Mammary epithelial cell (primary cell): ENCODE measurements at regions of chr5 and their contacts with region 1.

Region 1: DNA sequence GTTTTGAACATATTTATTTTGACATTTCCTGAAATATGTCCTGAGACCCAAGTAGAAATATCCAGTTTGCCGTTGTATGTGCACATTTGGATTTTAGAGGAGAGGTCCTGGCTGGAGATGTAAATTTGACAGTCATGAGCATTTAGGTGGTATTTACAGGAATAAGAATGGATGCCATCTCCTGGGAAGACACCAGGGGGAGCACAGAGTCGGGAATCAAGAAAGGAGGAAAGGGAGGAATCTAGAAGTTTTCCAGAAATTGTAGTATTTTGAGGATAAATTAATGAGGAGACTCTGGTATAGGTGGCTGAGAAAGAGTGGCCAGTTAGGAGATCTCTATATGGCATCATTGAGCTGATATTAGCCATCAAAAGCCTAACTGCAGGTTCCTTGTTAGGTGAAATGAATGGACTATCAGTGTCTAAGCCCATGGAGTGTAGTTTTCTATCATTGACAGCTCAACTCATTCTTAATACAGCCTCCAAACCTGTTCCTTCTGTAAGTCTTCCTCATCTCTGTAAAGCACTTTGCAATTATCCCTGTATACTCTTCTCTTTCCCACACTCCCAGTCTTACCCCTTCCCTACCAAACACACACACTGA is 7.2 kb downstream of the GAPT start:
- DNase-seq: peak; percentile 2
- H3K4me3 ChIP-seq: no peak overlapping the region
- H3K27ac ChIP-seq: no peak overlapping the region
- H3K4me1 ChIP-seq: no peaks in the 10 kb centered on the region
- H3K27me3 ChIP-seq: no peaks in the 10 kb centered on the region
- CTCF ChIP-seq: peak; percentile 84 to 86

Region 2: GRCh38 chr5:58369513-58370190 is 128.8 kb before region 1 on chr5:
- CTCF ChIA-PET with region 1: interaction called, 15 read pairs
- dilution Hi-C with region 1: no loop called
- in situ Hi-C with region 1: no loop called
- intact Hi-C with region 1: no loop called
- DNase-seq: no peak
- H3K4me3 ChIP-seq: no peak overlapping the region
- H3K27ac ChIP-seq: no peak overlapping the region
- H3K4me1 ChIP-seq: no peaks in the 10 kb centered on the region
- H3K27me3 ChIP-seq: no peaks in the 10 kb centered on the region
- CTCF ChIP-seq: no peak

Region 3: DNA sequence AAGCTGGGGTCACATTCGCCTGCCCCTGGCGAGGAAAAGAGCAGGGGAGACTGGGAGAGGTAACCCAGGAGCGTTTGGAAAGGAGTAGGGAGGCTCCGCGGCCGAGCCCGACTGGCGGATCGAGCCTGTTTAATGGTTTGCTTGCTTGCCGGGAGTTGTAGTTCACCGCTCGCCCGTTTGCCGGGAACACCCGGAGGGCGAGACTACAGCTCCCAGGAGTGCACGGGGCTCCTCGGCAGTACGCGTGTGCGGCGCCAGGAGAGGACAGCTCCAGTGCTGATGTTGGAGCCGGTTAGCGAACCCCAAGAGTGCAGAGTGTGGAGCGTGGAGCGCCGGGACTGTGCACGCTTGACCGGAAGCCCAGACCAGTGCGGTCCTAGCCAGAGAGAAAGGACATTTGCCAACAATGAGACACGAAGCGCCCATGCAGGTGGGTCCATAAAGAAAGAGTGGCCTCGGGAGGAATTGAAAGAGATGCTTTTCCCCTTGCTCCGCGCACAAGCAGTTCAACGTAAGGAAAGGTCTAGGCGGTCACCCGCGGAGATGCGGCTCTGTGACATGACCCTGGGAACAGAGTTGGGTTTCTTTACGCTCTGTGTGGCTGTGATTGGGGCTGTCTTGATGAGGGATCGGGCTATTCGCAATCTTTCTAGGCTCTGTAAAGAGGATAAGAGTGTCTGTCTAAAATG is 84.5 kb after region 1 on chr5 and contains the start of gene RAB3C:
- CTCF ChIA-PET with region 1: no interaction called
- dilution Hi-C with region 1: loop called (anchors 5 kb)
- in situ Hi-C with region 1: no loop called
- intact Hi-C with region 1: loop called (anchors 1 kb)
- DNase-seq: peak; percentile 91
- H3K4me3 ChIP-seq: peak within 1 kb of the TSS; percentile 44 to 61 (median 59)
- H3K27ac ChIP-seq: no peak within 1 kb of the TSS
- H3K4me1 ChIP-seq: peaks cover 6% of the 10 kb centered on the region
- H3K27me3 ChIP-seq: peaks cover 9% of the 10 kb centered on the region
- CTCF ChIP-seq: no peak
- total RNA-seq, gene RAB3C: not detected

Region 4: DNA sequence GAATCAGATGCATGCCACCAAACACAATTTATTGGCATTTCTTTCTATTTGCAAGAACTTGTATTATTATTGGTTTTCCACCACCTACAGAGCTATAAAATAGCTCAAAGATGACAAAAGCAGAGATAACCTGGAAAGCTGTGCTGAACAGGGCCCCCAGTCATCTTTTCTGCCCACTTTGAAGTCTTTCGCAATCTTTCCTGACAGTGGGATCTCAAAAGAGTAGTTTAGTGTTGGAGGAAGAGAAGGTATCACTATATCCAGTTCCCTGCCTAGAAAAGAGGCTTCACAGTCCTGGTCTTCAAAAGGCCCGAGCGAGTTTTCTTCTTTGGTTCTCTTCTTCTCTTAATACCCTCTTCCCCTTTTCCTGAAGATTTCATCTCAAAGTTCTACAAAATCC is 315.4 kb after region 1 on chr5:
- CTCF ChIA-PET with region 1: no interaction called
- dilution Hi-C with region 1: no loop called
- in situ Hi-C with region 1: no loop called
- intact Hi-C with region 1: loop called (anchors 1 kb)
- DNase-seq: no peak
- H3K4me3 ChIP-seq: no peak overlapping the region
- H3K27ac ChIP-seq: no peak overlapping the region
- H3K4me1 ChIP-seq: no peaks in the 10 kb centered on the region
- H3K27me3 ChIP-seq: peaks cover 4% of the 10 kb centered on the region
- CTCF ChIP-seq: no peak

Region 5: DNA sequence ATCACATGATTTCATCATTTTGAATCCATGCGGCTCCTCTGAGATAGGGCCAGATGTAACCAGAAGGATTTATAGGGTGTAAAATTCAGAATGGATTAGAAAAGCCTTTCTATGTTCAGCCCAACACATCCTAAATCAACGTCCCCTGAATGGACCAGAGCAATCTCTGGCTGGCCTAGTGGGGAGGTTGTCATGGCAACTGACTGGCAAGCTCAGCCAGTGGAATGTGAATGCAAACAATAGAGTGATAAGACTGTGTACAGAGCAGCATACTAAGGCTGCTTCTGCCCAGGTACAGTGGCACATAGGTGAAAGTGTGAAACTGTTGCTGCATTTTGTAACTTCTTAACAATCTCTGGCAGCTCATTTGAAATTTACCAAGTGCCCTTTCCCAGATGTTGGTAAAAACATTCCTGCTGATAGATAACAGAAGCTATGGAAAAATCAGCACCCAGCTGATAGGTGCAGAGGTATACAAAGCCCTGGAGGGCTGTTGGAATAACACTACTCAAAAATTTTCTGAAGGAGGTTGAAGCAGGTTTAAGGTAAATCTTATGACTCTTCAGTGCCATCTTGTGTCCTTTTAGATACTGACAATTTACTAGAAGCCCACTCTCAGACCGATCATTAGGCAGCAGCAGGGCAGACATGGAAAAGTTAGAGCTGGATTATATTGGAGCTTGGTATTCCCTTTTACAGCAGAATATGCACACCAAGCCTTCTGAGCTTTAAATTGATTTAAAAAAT is 351.7 kb after region 1 on chr5:
- CTCF ChIA-PET with region 1: no interaction called
- dilution Hi-C with region 1: no loop called
- in situ Hi-C with region 1: loop called in 1 of 2 experiments (anchors 25 kb)
- intact Hi-C with region 1: loop called (anchors 1 kb)
- DNase-seq: peak; percentile 9
- H3K4me3 ChIP-seq: no peak overlapping the region
- H3K27ac ChIP-seq: no peak overlapping the region
- H3K4me1 ChIP-seq: no peaks in the 10 kb centered on the region
- H3K27me3 ChIP-seq: peaks cover 4% of the 10 kb centered on the region
- CTCF ChIP-seq: peak; percentile 24 to 57

Region 6: DNA sequence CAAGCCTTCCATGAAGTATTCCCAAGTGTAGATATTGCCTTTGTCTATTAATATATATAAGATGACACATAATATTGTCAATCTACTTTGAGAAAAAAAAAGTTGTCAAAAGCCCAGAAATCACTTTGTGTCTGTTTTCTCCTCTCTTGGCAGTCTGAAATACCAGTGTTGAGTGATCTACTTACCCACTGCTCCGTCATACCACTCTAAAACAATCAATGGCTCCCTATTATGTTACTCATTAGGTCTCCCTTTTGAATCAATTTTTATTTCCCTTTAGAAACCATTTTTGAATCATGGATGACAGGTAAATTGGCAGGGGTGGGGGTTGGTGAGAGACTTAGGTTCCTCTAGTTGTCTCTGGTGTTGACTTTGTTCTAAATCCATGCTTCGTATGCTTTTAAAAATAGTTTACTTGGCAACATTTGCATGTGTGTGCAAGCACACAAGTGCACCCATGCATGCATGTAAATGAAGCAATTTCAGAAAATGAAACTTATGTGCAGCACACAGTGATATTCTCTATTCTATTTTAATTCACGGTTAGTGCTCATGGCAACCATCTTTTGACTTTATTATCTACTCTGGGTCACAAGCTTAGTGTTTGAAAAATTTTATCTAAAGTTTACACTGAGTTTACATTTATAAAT is 463.3 kb after region 1 on chr5:
- CTCF ChIA-PET with region 1: no interaction called
- dilution Hi-C with region 1: no loop called
- in situ Hi-C with region 1: no loop called
- intact Hi-C with region 1: no loop called
- DNase-seq: no peak
- H3K4me3 ChIP-seq: no peak overlapping the region
- H3K27ac ChIP-seq: no peak overlapping the region
- H3K4me1 ChIP-seq: no peaks in the 10 kb centered on the region
- H3K27me3 ChIP-seq: no peaks in the 10 kb centered on the region
- CTCF ChIP-seq: no peak